ENCODE measurements at regions of chr19 and their contacts with region 1.

Region 1: GRCh38 chr19:6141217-6141616 is 5.8 kb downstream of the ACSBG2 start:
- DNase-seq: no peak
- ATAC-seq: no peak
- H3K4me3 ChIP-seq: no peak overlapping the region
- H3K27ac ChIP-seq: no peak overlapping the region
- H3K4me1 ChIP-seq: no peaks in the 10 kb centered on the region
- H3K27me3 ChIP-seq: no peaks in the 10 kb centered on the region
- CTCF ChIP-seq: no peak

Region 2: DNA sequence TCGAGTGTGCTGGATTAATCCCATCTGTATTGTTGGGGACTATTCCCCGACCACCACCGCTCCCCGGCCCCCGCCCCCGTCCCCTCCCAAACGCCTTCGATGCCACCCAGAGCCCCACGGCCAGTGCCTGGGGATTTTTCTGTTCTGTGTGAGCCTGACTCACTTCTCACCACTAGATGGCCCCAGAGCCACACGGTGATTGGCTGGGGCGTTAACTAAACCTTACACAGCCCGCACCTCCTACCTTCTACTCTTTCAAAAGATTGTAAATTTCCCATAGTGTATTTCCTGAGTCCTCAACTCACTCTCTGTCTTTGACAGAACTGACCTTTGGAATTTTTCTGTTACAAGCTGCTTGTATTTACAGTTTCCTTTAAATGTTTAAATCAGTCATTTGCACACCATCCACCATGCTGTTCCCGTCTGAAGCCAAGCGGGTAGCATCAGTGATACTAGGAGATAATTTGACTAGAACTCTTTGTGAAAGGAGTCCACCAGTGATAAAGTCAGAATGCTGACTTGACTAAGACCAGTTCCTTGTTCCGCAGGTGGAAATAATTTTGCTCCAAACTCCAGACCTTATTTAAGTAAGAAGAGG is 92.3 kb before region 1 on chr19:
- intact Hi-C with region 1: no loop called
- DNase-seq: peak; percentile 74 to 78
- ATAC-seq: peak; percentile 93 to 98 (median 96)
- H3K4me3 ChIP-seq: peak overlapping the region in 2 of 10 donors; percentile 7 to 11
- H3K27ac ChIP-seq: peak overlapping the region in 1 of 10 donors; percentile 7
- H3K4me1 ChIP-seq: peaks cover 0 to 20% (median 11%) of the 10 kb centered on the region in 9 donors
- H3K27me3 ChIP-seq: no peaks in the 10 kb centered on the region
- CTCF ChIP-seq: peak; percentile 81 to 94 (median 89)

Region 3: DNA sequence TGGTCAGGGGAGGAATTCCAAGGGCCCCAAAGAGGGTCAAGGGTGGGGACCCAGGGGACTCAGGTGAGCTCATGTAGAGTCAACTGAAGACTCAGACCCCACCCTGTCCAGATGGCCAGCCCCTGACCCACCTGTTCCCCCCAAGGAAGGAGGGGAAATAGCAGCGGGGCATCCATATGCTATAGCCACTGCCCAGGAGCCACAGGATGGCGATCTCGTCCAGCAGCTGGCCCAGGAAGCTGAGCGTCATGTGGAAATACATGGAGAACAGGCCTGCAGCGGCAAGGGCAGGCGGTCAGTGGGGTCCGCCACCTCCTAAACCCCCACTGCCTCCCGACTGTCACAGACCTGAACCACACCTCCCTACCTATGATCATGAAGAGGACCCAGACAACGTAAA is 170.8 kb after region 1 on chr19:
- intact Hi-C with region 1: loop called in 1 of 10 experiments (anchors 10 kb)
- DNase-seq: no peak
- ATAC-seq: no peak
- H3K4me3 ChIP-seq: no peak overlapping the region
- H3K27ac ChIP-seq: no peak overlapping the region
- H3K4me1 ChIP-seq: no peaks in the 10 kb centered on the region
- H3K27me3 ChIP-seq: peaks cover 0 to 9% (median 0%) of the 10 kb centered on the region in 7 donors
- CTCF ChIP-seq: no peak